ENCODE measurements at regions of chr14 and their contacts with region 1.

Region 1: DNA sequence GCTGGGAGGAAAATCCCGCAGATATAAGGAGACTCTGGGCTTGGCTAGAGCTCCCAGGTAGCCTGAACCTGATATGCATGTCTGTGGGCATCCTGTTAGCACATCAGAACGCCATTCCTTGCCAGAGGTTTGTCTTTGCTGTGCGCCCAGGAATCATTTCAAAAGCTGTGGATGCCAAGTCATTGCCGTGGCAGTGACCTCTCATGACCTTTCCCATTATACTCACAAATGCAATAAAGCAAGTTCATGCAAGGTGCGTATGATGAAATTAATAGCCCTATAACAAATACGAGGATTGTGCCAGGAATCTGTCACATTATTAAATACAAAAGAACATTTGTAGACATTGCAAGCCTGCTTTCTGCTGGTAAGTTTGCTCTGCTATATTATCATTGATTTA is 229.1 kb upstream of the PELI2 start:
- DNase-seq: peak; percentile 89
- ATAC-seq: peak; percentile 76
- H3K4me3 ChIP-seq: no peak overlapping the region
- H3K27ac ChIP-seq: no peak overlapping the region
- H3K4me1 ChIP-seq: peaks cover 8% of the 10 kb centered on the region; the same call in 1 of the 2 replicates
- H3K27me3 ChIP-seq: peaks cover 52% of the 10 kb centered on the region
- CTCF ChIP-seq: no peak

Region 2: GRCh38 chr14:55731881-55732498 is 157.1 kb before region 1 on chr14:
- CTCF ChIA-PET with region 1: interaction called, 4 read pairs
- POLR2A ChIA-PET with region 1: no interaction called
- intact Hi-C with region 1: loop called (anchors 1 kb)
- DNase-seq: peak; percentile 80
- ATAC-seq: peak; percentile 57
- H3K4me3 ChIP-seq: no peak overlapping the region
- H3K27ac ChIP-seq: no peak overlapping the region
- H3K4me1 ChIP-seq: peaks cover 11% of the 10 kb centered on the region
- H3K27me3 ChIP-seq: no peaks in the 10 kb centered on the region
- CTCF ChIP-seq: peak; percentile 98

Region 3: DNA sequence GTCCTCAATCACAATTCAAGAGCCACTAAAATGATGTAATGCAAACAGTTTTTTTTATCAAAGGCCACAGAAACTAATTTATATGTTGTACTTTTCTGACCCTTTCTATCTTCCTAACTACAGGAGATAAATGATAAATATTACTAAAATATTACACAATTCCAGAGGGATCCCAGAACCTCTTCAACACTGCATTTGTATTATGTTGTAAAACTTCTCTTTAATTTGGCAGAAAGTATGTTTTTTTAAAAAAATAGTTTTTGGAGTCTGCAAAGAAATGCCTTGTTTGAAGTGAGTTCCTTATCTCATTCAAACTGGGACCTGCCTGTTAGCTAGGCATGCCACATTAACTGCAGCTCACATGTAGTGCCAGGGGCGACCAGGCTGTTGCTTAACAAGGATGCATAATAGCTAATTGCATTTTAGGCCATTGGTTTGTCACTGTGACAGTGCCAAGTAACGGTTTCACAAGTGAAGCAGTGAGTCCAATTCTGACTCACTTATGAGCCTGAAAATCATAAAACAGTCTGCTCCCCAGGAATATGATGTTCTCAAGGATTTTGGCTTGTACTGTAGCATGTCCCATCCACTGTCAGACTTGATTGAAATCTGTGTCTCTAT is 42.2 kb before region 1 on chr14:
- CTCF ChIA-PET with region 1: no interaction called
- POLR2A ChIA-PET with region 1: no interaction called
- intact Hi-C with region 1: loop called (anchors 1 kb)
- DNase-seq: peak; percentile 55
- ATAC-seq: peak; percentile 40
- H3K4me3 ChIP-seq: no peak overlapping the region
- H3K27ac ChIP-seq: peak overlapping the region; percentile 56
- H3K4me1 ChIP-seq: peaks cover 32% of the 10 kb centered on the region
- H3K27me3 ChIP-seq: no peaks in the 10 kb centered on the region
- CTCF ChIP-seq: no peak

Region 4: GRCh38 chr14:55867719-55868118 is 21.4 kb before region 1 on chr14:
- CTCF ChIA-PET with region 1: no interaction called
- POLR2A ChIA-PET with region 1: no interaction called
- intact Hi-C with region 1: loop called (anchors 1 kb)
- DNase-seq: peak; percentile 80
- ATAC-seq: peak; percentile 91
- H3K4me3 ChIP-seq: no peak overlapping the region
- H3K27ac ChIP-seq: no peak overlapping the region
- H3K4me1 ChIP-seq: peaks cover 25% of the 10 kb centered on the region
- H3K27me3 ChIP-seq: no peaks in the 10 kb centered on the region
- CTCF ChIP-seq: no peak

Region 5: GRCh38 chr14:55877942-55878341 is 11.2 kb before region 1 on chr14:
- CTCF ChIA-PET with region 1: no interaction called
- POLR2A ChIA-PET with region 1: no interaction called
- intact Hi-C with region 1: no loop called
- DNase-seq: no peak
- ATAC-seq: no peak
- H3K4me3 ChIP-seq: no peak overlapping the region
- H3K27ac ChIP-seq: no peak overlapping the region
- H3K4me1 ChIP-seq: no peaks in the 10 kb centered on the region
- H3K27me3 ChIP-seq: peaks cover 56% of the 10 kb centered on the region
- CTCF ChIP-seq: no peak

Region 6: DNA sequence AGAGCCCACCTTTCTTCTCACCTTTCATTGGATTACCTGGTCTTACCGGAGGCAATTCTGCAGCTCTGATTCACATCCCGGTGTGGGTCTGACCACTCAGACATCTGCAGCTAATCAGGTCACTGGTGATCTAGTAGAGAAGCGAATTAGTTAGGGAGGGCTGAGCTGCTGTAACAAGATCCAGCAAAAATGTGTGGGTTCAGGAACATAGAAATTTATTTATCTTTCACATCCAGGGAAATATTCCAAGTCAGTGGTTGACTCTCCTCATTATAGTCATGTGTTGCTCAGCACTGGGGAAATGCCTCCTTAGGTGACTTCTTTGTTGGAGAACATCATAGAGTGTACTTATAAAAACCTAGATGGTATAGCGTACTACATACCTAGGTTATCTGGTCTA is 10.4 kb after region 1 on chr14:
- CTCF ChIA-PET with region 1: no interaction called
- POLR2A ChIA-PET with region 1: no interaction called
- intact Hi-C with region 1: no loop called
- DNase-seq: no peak
- ATAC-seq: no peak
- H3K4me3 ChIP-seq: no peak overlapping the region
- H3K27ac ChIP-seq: no peak overlapping the region
- H3K4me1 ChIP-seq: no peaks in the 10 kb centered on the region
- H3K27me3 ChIP-seq: peaks cover 34% of the 10 kb centered on the region; the same call in 1 of the 2 replicates
- CTCF ChIP-seq: no peak